ENCODE measurements at regions of chr11 and their contacts with region 1.

Region 1: GRCh38 chr11:60370811-60371298 is 7.5 kb upstream of the MS4A7 start:
- DNase-seq: peak; percentile 72
- H3K4me3 ChIP-seq: no peak overlapping the region
- H3K27ac ChIP-seq: peak overlapping the region; percentile 35
- H3K4me1 ChIP-seq: peaks cover 16% of the 10 kb centered on the region
- H3K27me3 ChIP-seq: peaks cover 3 to 6% of the 10 kb centered on the region in 2 experiments
- CTCF ChIP-seq: no peak
- POLR2A ChIP-seq: no peak

Region 2: DNA sequence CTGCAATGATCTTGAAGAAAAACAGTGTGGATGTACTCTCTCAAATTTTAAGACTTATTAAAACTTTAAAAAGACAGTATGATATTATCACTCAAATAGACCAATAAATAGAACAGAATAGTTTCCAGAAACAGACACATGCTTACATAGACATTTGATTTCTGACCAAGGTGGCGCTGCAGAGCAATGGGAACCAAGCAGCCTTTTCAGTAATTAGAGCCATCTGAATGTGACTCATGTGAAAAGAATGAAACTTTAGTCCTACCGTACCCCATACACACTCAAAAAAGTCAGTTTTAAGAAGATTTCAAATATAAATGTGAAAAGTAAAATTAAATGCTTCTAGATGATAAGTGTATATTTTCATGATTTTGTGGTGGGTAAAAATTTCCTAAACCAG is 254.4 kb after region 1 on chr11:
- CTCF ChIA-PET with region 1: interaction called, 147 read pairs
- POLR2A ChIA-PET with region 1: no interaction called
- dilution Hi-C with region 1: no loop called
- intact Hi-C with region 1: no loop called
- DNase-seq: peak; percentile 52
- H3K4me3 ChIP-seq: no peak overlapping the region
- H3K27ac ChIP-seq: no peak overlapping the region
- H3K4me1 ChIP-seq: no peaks in the 10 kb centered on the region
- H3K27me3 ChIP-seq: no peaks in the 10 kb centered on the region
- CTCF ChIP-seq: peak; percentile 8 to 28
- POLR2A ChIP-seq: no peak